ENCODE measurements at regions of chr9 and their contacts with region 1.

Region 1: DNA sequence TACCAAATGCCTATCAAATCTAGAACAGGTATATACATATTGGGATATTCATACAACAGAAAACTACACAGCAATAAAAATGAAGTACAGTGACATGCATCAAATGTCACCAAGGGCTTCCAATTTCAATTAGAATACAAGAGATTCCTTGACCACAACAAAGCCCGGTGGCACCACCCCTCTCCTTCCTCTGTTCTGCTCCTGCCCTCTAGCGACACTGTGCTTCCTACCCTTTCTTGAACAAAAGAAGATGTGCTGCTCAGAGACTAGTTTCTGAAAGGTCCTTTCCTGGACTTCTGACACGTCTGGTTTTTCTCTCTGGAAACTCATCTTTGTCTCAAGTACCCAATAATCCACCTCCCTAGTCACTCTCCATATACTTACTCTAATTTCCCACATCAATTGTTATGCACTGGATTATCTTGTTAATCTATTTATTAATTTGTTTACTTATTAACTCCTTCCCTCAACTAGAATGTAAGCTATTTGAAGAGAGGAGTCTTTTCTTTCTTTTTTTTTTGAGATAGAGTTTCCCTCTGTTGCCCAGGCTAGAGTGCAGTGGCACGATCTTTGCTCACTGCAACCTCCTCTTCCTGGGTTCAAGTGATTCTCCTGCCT is 70.4 kb upstream of the CTSV start:
- DNase-seq: peak; percentile 7 to 70 (median 23)
- ATAC-seq: peak; percentile 96
- H3K4me3 ChIP-seq: no peak overlapping the region
- H3K27ac ChIP-seq: no peak overlapping the region
- H3K4me1 ChIP-seq: no peaks in the 10 kb centered on the region
- H3K27me3 ChIP-seq: peaks cover 2 to 17% of the 10 kb centered on the region in 2 experiments; a peak in 2 of 5 replicates
- CTCF ChIP-seq: peak; percentile 69 to 86 (median 74)
- EP300 ChIP-seq: no peak
- POLR2A ChIP-seq: no peak
- RAD21 ChIP-seq: peak; percentile 85 to 92

Region 2: DNA sequence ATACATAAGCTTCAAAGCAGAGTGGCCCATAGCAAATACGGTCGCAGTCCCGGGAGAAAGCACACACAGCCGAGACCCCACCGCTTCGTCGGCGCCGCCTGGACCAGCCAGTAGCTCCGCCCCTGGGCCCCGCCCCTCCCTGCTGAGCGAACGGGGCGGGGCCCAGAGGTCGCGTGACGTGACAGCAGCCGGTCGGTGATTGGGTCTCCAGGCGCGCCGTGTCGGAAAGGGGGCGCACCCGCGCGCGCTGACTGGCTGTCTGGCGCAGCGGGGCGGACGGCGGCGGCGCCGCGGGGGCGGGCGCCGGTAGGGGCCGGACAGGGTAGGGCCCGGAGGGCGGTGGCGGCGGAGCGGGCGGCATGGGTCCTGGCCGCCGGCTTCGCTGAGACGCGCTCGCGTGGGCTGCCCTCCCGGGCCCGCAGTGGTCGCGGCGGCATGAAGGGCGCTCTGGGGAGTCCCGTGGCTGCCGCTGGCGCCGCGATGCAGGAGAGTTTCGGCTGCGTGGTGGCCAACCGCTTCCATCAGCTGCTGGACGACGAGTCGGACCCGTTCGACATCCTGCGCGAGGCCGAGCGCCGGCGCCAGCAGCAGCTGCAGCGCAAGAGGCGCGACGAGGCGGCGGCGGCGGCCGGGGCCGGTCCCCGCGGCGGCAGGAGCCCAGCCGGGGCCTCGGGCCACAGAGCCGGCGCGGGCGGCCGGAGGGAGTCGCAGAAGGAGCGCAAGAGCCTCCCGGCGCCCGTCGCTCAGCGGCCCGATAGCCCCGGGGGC is 659.3 kb before region 1 on chr9 and contains the start of gene HABP4:
- CTCF ChIA-PET with region 1: no interaction called
- POLR2A ChIA-PET with region 1: no interaction called
- in situ Hi-C with region 1: no loop called
- intact Hi-C with region 1: loop called (anchors 10 kb)
- DNase-seq: peak; percentile 96 to 99 (median 99)
- ATAC-seq: peak; percentile 100
- H3K4me3 ChIP-seq: peak within 1 kb of the TSS; percentile 58
- H3K27ac ChIP-seq: no peak within 1 kb of the TSS
- H3K4me1 ChIP-seq: peaks cover 2 to 18% of the 10 kb centered on the region in 2 experiments; a peak in 3 of 5 replicates
- H3K27me3 ChIP-seq: peaks cover 2 to 14% of the 10 kb centered on the region in 2 experiments; a peak in 2 of 5 replicates
- CTCF ChIP-seq: peak in 1 of 3 experiments; percentile 8; a peak in 1 of 6 replicates
- EP300 ChIP-seq: no peak
- POLR2A ChIP-seq: no peak
- RAD21 ChIP-seq: no peak
- polyA plus RNA-seq, gene HABP4: 0.38 to 0.52 TPM

Region 3: DNA sequence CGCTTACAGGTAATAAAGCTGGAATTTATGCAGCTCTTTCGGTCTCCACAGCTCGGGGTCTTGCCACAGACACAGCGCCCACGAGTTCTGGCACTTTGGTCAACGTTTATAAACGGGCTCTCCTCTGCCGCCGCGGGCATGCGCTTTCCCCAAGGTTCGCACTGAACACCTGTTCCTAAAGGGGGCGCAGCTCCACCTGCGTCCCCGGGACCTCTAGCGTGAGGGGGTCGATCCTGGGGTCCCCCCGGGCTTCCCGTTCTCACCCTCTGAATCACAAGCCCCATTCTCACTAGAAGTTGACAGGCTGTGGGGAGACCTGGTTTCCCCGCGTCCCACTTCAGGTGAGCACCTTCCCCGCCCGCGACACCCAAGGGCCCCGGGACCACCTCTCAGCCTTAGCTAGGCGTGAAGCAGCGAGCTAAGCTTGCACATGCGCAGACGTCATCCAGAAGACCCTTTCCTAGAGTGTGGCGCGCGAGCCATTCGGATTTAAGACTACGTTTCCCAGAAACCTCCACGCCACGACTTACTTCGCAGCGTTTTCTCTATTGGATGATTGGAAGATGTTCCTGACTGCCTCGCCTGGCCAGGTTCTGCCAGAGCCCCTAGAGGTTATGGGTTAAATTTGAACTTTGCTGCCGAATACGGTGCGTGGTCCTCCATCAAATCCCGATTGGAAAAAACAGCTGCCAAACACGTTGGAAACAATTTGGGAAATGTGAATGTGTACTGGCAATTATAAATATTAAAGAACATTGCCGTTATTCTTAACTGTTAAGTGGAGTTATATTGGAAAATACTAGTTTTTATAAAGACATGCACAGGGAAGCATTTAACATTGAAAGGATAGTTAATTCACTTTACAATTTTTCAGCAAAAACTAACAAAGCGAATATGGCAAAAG is 233.6 kb before region 1 on chr9:
- CTCF ChIA-PET with region 1: no interaction called
- POLR2A ChIA-PET with region 1: no interaction called
- in situ Hi-C with region 1: loop called (anchors 10 kb)
- intact Hi-C with region 1: no loop called
- DNase-seq: no peak
- ATAC-seq: no peak
- H3K4me3 ChIP-seq: no peak overlapping the region
- H3K27ac ChIP-seq: no peak overlapping the region
- H3K4me1 ChIP-seq: peaks cover 0 to 4% of the 10 kb centered on the region in 2 experiments; a peak in 1 of 5 replicates
- H3K27me3 ChIP-seq: no peaks in the 10 kb centered on the region
- CTCF ChIP-seq: no peak
- EP300 ChIP-seq: no peak
- POLR2A ChIP-seq: no peak
- RAD21 ChIP-seq: no peak

Region 4: DNA sequence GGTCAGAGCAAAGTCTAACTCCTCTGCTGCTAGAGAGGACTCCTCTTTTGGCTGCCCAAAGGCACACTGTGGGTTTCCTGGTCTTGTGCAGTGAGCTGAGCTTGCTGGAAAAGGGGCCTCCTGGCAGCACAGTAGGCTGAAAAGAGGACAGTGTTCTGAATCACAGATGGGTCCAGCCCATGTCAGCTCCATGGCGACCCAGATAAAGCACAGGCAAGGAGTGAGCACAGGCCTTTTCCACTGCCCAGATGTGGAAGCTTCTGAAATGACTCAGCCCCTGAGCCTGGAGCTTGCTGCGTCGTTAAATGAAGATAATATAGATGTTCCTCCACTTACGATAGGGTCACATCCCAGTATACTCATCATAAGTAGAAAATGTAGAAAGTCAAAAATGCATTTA is 206.2 kb after region 1 on chr9:
- CTCF ChIA-PET with region 1: no interaction called
- POLR2A ChIA-PET with region 1: no interaction called
- in situ Hi-C with region 1: no loop called
- intact Hi-C with region 1: no loop called
- DNase-seq: peak in 1 of 4 experiments; percentile 37
- ATAC-seq: peak; percentile 57
- H3K4me3 ChIP-seq: no peak overlapping the region
- H3K27ac ChIP-seq: no peak overlapping the region
- H3K4me1 ChIP-seq: no peaks in the 10 kb centered on the region; a peak in 2 of 5 replicates
- H3K27me3 ChIP-seq: no peaks in the 10 kb centered on the region
- CTCF ChIP-seq: no peak
- EP300 ChIP-seq: no peak
- POLR2A ChIP-seq: no peak
- RAD21 ChIP-seq: no peak

Measured in K562 (cell line).